Sciatic nerve (tissue), 2 donors: ENCODE measurements at regions of chr18 and their contacts with region 1.

Region 1: DNA sequence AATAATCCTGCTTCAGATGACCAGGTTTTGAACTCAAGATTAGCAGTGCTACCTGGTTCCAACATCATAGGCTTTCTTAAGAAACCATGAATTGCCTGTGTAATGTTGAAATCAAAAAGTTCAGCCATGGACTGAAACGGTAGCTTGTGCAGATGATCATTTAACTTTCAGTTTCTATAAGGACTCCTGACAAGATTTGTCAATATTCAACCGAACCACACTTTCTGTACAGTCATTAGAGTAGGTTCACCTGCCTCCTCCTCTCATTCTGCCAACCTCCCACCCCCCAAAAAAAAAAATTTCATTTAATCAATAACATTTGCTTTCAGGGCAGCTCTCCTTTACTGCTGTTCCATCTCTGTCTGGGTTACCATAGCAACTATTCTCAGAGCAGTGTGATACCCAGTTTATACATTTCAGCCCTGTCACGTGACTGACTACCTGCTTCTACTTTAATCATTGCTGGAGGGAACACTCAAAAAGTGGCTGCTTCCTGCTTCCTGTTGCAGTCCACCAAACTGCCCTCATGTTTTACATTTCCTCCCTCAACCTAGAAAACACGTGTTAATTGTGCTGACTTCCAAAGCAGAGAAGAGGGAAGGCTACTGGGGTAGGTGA is 275.5 kb downstream of the SS18 start:
- DNase-seq: no peak
- ATAC-seq: no peak

Region 2: GRCh38 chr18:25827228-25827627 is 12.3 kb after region 1 on chr18:
- intact Hi-C with region 1: loop called (anchors 1 kb)
- DNase-seq: no peak
- ATAC-seq: no peak

Region 3: DNA sequence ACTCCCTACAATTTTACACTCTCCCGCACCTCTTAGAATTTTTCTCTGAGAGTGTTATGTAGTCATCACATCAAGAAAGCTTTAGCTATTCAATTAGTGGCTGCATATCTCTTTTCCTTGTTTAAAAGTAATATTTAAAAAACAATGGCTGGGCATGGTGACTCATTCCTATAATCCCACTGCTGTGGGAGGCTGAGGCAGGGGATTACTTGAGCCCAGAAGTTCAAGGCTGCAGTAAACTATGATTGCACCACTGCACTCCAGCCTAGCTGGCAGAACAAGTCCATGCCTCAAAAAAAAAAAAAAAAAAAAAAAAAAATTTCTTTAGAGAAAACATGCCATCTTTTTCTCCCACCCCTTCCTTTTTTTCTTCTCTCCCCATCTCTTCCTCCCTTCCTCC is 1006.2 kb after region 1 on chr18:
- intact Hi-C with region 1: no loop called
- DNase-seq: no peak
- ATAC-seq: no peak

Region 4: DNA sequence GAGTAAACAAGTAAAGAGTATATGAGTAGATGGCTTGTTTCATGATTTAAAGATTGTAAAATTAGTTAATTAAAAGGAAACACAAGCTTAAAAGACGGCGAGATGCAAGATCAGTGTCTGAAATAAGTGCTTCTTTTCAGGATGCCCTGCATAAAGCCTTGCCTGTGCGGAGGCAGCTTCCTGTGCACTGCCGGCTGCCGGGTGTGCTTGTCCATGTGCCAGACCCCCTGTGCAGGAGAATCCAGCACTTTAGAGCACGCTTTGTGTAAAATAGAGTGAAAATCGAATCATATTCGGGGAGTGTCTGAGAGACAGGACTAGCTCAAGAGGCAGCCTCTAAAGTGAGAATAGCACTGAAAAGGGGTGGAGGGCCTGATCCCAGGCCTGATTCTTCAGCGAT is 1215.5 kb after region 1 on chr18:
- intact Hi-C with region 1: no loop called
- DNase-seq: no peak
- ATAC-seq: no peak